ENCODE measurements at regions of chr22 and their contacts with region 1.

Region 1: DNA sequence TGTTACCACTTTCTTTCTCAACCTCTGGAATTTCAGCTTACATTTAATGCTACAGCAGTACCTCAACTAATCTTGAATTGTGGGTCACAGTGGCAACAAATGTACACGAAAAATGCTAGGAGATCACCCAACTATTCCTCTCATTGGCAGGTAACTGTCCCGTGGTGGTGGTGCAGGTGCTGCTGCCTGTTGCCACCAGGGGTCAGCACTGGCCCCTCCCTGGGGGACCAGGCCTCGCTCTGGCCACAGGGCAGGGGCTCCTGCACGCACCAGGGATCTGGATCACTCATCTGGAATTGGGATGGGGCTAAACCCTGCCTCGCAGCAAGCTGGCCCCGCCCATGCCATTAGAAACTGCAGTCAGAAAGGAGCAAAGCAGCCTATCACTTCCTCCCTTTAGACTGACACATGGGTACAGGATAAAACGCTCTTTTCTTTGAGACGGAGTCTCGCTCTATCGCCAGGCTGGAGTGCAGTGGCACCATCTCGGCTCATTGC is 6.9 kb upstream of the POLDIP3 start:
- DNase-seq: peak; percentile 61
- ATAC-seq: peak; percentile 82
- H3K4me3 ChIP-seq: no peak overlapping the region
- H3K27ac ChIP-seq: no peak overlapping the region
- H3K4me1 ChIP-seq: peaks cover 9% of the 10 kb centered on the region
- H3K27me3 ChIP-seq: no peaks in the 10 kb centered on the region
- CTCF ChIP-seq: peak; percentile 82
- POLR2A ChIP-seq: no peak
- RAD21 ChIP-seq: peak; percentile 79

Region 2: GRCh38 chr22:43126480-43127165 is 505.1 kb after region 1 on chr22:
- CTCF ChIA-PET with region 1: no interaction called
- POLR2A ChIA-PET with region 1: interaction called, 12 read pairs
- dilution Hi-C with region 1: no loop called
- in situ Hi-C with region 1: no loop called
- intact Hi-C with region 1: no loop called
- DNase-seq: peak; percentile 85
- ATAC-seq: peak; percentile 94
- H3K4me3 ChIP-seq: no peak overlapping the region
- H3K27ac ChIP-seq: no peak overlapping the region
- H3K4me1 ChIP-seq: peaks cover 12% of the 10 kb centered on the region
- H3K27me3 ChIP-seq: no peaks in the 10 kb centered on the region
- CTCF ChIP-seq: no peak
- POLR2A ChIP-seq: no peak
- RAD21 ChIP-seq: no peak

Measured in IMR-90 (cell line).